Naive thymus-derived CD4-positive, alpha-beta T cell (primary cell): ENCODE measurements at regions of chr4 and their contacts with region 1.

Region 1: GRCh38 chr4:110193822-110194761 is 4.3 kb downstream of the ELOVL6 start:
- DNase-seq: peak; percentile 35 to 88 (median 80)
- ATAC-seq: peak; percentile 90
- H3K4me3 ChIP-seq: no peak overlapping the region
- H3K4me3 Mint-ChIP-seq: peak overlapping the region in 9 of 10 donors; percentile 19 to 70 (median 49)
- H3K27ac ChIP-seq: peak overlapping the region; percentile 59
- H3K27ac Mint-ChIP-seq: peak overlapping the region; percentile 68 to 97 (median 92)
- H3K4me1 ChIP-seq: peaks cover 0 to 11% of the 10 kb centered on the region in 2 donors
- H3K4me1 Mint-ChIP-seq: peaks cover 16 to 51% (median 29%) of the 10 kb centered on the region in 7 donors
- H3K27me3 ChIP-seq: no peaks in the 10 kb centered on the region
- H3K27me3 Mint-ChIP-seq: no peaks in the 10 kb centered on the region

Region 2: GRCh38 chr4:109433205-109434006 is 760.7 kb before region 1 on chr4 and contains the start of gene SEC24B:
- CTCF ChIA-PET with region 1: no interaction called
- POLR2A ChIA-PET with region 1: no interaction called
- intact Hi-C with region 1: loop called (anchors 1 to 5 kb)
- DNase-seq: peak; percentile 84 to 91 (median 90)
- ATAC-seq: peak; percentile 95
- H3K4me3 ChIP-seq: peak within 1 kb of the TSS; percentile 74
- H3K4me3 Mint-ChIP-seq: peak within 1 kb of the TSS; percentile 83 to 94 (median 88)
- H3K27ac ChIP-seq: peak within 1 kb of the TSS; percentile 93
- H3K27ac Mint-ChIP-seq: peak within 1 kb of the TSS; percentile 75 to 95 (median 93)
- H3K4me1 ChIP-seq: peaks cover 11 to 19% of the 10 kb centered on the region in 2 donors
- H3K4me1 Mint-ChIP-seq: peaks cover 29 to 61% (median 54%) of the 10 kb centered on the region in 7 donors
- H3K27me3 ChIP-seq: no peaks in the 10 kb centered on the region
- H3K27me3 Mint-ChIP-seq: no peaks in the 10 kb centered on the region
- total RNA-seq, gene SEC24B: 29.2 to 41.8 (median 35.2) TPM

Region 3: DNA sequence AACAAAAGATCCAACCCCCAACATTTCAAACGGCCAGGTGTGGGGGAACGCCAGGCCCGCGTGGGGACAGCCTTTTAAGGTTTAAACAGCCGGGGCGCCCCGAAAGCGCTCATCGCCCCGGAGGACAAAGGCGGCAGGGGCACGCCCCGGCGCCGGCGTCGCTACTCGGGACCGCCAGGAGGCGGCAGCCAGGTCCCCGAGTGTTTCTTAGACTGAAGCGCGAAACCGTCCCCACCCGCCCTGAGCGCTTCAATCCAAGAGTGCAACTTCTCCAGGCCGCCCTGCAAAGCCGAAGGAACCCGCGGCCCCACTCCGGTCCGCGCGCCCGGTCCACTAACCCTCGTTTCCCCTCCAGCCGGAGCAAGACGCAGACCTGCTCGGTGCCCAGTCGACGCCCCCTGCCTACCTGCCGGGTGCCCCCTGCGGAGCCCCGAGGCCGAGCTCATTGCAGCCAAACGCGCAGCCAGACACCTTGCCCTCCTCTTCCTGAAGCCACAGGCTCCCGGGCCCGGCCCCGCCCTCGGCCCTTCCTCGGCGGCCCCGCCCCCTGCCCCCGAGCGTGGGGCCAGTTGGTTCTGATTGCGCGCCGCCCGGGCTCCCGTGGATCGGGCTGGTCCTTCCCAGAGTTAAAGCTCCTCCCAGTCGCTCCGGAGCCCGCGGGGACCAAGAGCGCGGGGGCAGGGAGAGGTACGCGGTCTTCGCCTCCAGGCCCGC is 491.0 kb before region 1 on chr4 and contains the start of gene CASP6:
- CTCF ChIA-PET with region 1: no interaction called
- POLR2A ChIA-PET with region 1: no interaction called
- intact Hi-C with region 1: loop called in 1 of 2 experiments (anchors 10 kb)
- DNase-seq: peak; percentile 64 to 78 (median 75)
- ATAC-seq: peak; percentile 92
- H3K4me3 ChIP-seq: peak within 1 kb of the TSS; percentile 78
- H3K4me3 Mint-ChIP-seq: peak within 1 kb of the TSS; percentile 86 to 96 (median 94)
- H3K27ac ChIP-seq: peak within 1 kb of the TSS; percentile 83
- H3K27ac Mint-ChIP-seq: peak within 1 kb of the TSS; percentile 85 to 95 (median 94)
- H3K4me1 ChIP-seq: peaks cover 8 to 16% of the 10 kb centered on the region in 2 donors
- H3K4me1 Mint-ChIP-seq: peaks cover 20 to 50% (median 48%) of the 10 kb centered on the region in 7 donors
- H3K27me3 ChIP-seq: no peaks in the 10 kb centered on the region
- H3K27me3 Mint-ChIP-seq: no peaks in the 10 kb centered on the region
- total RNA-seq, gene CASP6: 9.3 to 29.9 (median 23.6) TPM

Region 4: DNA sequence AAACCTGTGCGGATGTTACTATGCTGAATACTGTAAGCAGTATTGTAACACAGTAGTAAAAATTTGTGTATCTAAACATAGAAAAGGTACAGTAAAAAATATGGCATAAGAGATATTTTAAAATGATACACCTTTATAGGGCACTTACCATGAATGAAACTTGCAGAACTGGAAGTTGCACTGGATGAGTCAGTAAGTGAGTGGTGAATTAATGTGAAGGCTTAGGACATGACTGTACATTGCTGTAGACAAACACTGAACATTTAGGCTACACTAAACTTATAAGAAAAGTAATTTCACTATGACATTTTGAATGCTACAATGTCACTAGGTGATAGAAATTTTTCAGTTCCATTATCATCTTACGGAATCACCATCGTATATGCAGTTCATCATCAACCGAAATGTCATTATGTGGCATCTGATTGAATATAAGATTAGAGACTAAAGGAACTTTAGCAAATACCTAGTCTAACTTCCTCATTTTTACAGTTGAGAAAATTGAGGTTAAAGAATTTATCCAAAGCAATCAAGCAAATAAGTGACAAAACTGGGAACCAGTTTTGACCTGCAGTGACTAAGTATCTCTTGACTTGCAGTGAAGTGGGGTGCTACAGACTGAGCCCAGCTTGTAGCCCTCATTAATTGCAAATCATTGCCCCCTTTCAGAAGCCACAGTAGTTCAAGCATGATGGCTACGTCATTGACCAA is 226.1 kb before region 1 on chr4:
- CTCF ChIA-PET with region 1: no interaction called
- POLR2A ChIA-PET with region 1: no interaction called
- intact Hi-C with region 1: no loop called
- DNase-seq: no peak
- ATAC-seq: peak; percentile 31
- H3K4me3 ChIP-seq: no peak overlapping the region
- H3K4me3 Mint-ChIP-seq: no peak overlapping the region
- H3K27ac ChIP-seq: no peak overlapping the region
- H3K27ac Mint-ChIP-seq: no peak overlapping the region
- H3K4me1 ChIP-seq: no peaks in the 10 kb centered on the region
- H3K4me1 Mint-ChIP-seq: peaks cover 7 to 12% (median 9%) of the 10 kb centered on the region in 7 donors
- H3K27me3 ChIP-seq: no peaks in the 10 kb centered on the region
- H3K27me3 Mint-ChIP-seq: peaks cover 9 to 32% (median 16%) of the 10 kb centered on the region in 5 donors

Region 5: GRCh38 chr4:110059556-110060191 is 134.4 kb before region 1 on chr4:
- CTCF ChIA-PET with region 1: no interaction called
- POLR2A ChIA-PET with region 1: no interaction called
- intact Hi-C with region 1: loop called in 1 of 2 experiments (anchors 1 kb)
- DNase-seq: no peak
- ATAC-seq: peak; percentile 70
- H3K4me3 ChIP-seq: no peak overlapping the region
- H3K4me3 Mint-ChIP-seq: peak overlapping the region in 2 of 10 donors; percentile 50 to 83
- H3K27ac ChIP-seq: no peak overlapping the region
- H3K27ac Mint-ChIP-seq: peak overlapping the region in 3 of 9 donors; percentile 19 to 92 (median 53)
- H3K4me1 ChIP-seq: peaks cover 0 to 23% of the 10 kb centered on the region in 2 donors
- H3K4me1 Mint-ChIP-seq: peaks cover 6 to 70% (median 12%) of the 10 kb centered on the region in 7 donors
- H3K27me3 ChIP-seq: no peaks in the 10 kb centered on the region
- H3K27me3 Mint-ChIP-seq: no peaks in the 10 kb centered on the region

Region 6: GRCh38 chr4:110211007-110211769 is 17.1 kb after region 1 on chr4:
- CTCF ChIA-PET with region 1: interaction called, 3 read pairs
- POLR2A ChIA-PET with region 1: interaction called, 3 read pairs
- intact Hi-C with region 1: loop called in 1 of 2 experiments (anchors 1 kb)
- DNase-seq: peak in 7 of 9 donors; percentile 15 to 59 (median 45)
- ATAC-seq: peak; percentile 78
- H3K4me3 ChIP-seq: no peak overlapping the region
- H3K4me3 Mint-ChIP-seq: peak overlapping the region in 2 of 10 donors; percentile 25 to 29
- H3K27ac ChIP-seq: no peak overlapping the region
- H3K27ac Mint-ChIP-seq: peak overlapping the region in 1 of 9 donors; percentile 25
- H3K4me1 ChIP-seq: no peaks in the 10 kb centered on the region
- H3K4me1 Mint-ChIP-seq: peaks cover 0 to 5% (median 0%) of the 10 kb centered on the region in 7 donors
- H3K27me3 ChIP-seq: no peaks in the 10 kb centered on the region
- H3K27me3 Mint-ChIP-seq: peaks cover 0 to 7% (median 0%) of the 10 kb centered on the region in 5 donors

Region 7: DNA sequence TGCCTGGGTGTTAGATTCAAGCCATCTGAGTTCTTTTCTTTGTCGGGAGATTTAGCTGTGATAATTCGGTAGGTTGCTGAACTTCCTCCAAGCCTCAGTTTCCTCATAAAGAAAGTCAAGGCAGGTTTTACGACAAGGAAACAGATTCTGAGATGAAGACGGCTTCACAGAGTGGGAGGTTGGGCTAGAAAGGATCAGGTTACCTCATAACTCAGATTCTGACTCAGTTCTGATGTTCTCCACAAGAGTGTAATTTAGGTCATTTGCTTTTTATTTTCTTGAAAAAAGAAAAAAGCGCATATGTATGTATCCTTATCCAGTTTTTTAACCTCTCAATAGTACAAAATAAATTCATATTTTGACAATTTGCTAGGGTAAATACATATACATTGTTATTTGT is 51.5 kb after region 1 on chr4:
- CTCF ChIA-PET with region 1: no interaction called
- POLR2A ChIA-PET with region 1: no interaction called
- intact Hi-C with region 1: no loop called
- DNase-seq: no peak
- ATAC-seq: no peak
- H3K4me3 ChIP-seq: no peak overlapping the region
- H3K4me3 Mint-ChIP-seq: no peak overlapping the region
- H3K27ac ChIP-seq: no peak overlapping the region
- H3K27ac Mint-ChIP-seq: no peak overlapping the region
- H3K4me1 ChIP-seq: no peaks in the 10 kb centered on the region
- H3K4me1 Mint-ChIP-seq: no peaks in the 10 kb centered on the region
- H3K27me3 ChIP-seq: no peaks in the 10 kb centered on the region
- H3K27me3 Mint-ChIP-seq: peaks cover 0 to 26% (median 11%) of the 10 kb centered on the region in 5 donors